CD4-positive, alpha-beta T cell (primary cell): ENCODE measurements at regions of chr4 and their contacts with region 1.

Region 1: GRCh38 chr4:74444891-74445642 is at the start of gene AREG:
- DNase-seq: peak; percentile 79 to 97 (median 90)
- ATAC-seq: peak; percentile 93
- H3K4me3 ChIP-seq: peak within 1 kb of the TSS; percentile 84
- H3K4me3 Mint-ChIP-seq: peak within 1 kb of the TSS; percentile 88
- H3K27ac ChIP-seq: peak within 1 kb of the TSS; percentile 72 to 93
- H3K27ac Mint-ChIP-seq: peak within 1 kb of the TSS; percentile 89
- H3K4me1 ChIP-seq: peaks cover 6% of the 10 kb centered on the region
- H3K4me1 Mint-ChIP-seq: peaks cover 15% of the 10 kb centered on the region
- H3K27me3 ChIP-seq: no peaks in the 10 kb centered on the region
- H3K27me3 Mint-ChIP-seq: peaks cover 5% of the 10 kb centered on the region
- CTCF ChIP-seq: peak; percentile 52
- total RNA-seq, gene AREG: 57.9 to 63.8 TPM

Region 2: GRCh38 chr4:74157561-74158465 is 287.3 kb before region 1 on chr4 and contains the start of gene MTHFD2L:
- CTCF ChIA-PET with region 1: no interaction called
- POLR2A ChIA-PET with region 1: no interaction called
- intact Hi-C with region 1: loop called in 1 of 2 experiments (anchors 5 kb)
- DNase-seq: peak; percentile 55 to 90 (median 74)
- ATAC-seq: peak; percentile 93
- H3K4me3 ChIP-seq: peak within 1 kb of the TSS; percentile 77
- H3K4me3 Mint-ChIP-seq: peak within 1 kb of the TSS; percentile 95
- H3K27ac ChIP-seq: no peak within 1 kb of the TSS
- H3K27ac Mint-ChIP-seq: peak within 1 kb of the TSS; percentile 87
- H3K4me1 ChIP-seq: peaks cover 14% of the 10 kb centered on the region
- H3K4me1 Mint-ChIP-seq: peaks cover 27% of the 10 kb centered on the region
- H3K27me3 ChIP-seq: no peaks in the 10 kb centered on the region
- H3K27me3 Mint-ChIP-seq: no peaks in the 10 kb centered on the region
- CTCF ChIP-seq: no peak
- total RNA-seq, gene MTHFD2L: 13.7 to 14.4 TPM

Region 3: GRCh38 chr4:74376888-74377483 is 68.1 kb before region 1 on chr4:
- CTCF ChIA-PET with region 1: interaction called, 4 read pairs
- POLR2A ChIA-PET with region 1: no interaction called
- intact Hi-C with region 1: loop called in 1 of 2 experiments (anchors 5 kb)
- DNase-seq: peak in 3 of 14 experiments; percentile 55 to 68 (median 67)
- ATAC-seq: peak; percentile 86
- H3K4me3 ChIP-seq: no peak overlapping the region
- H3K4me3 Mint-ChIP-seq: no peak overlapping the region
- H3K27ac ChIP-seq: no peak overlapping the region
- H3K27ac Mint-ChIP-seq: no peak overlapping the region
- H3K4me1 ChIP-seq: no peaks in the 10 kb centered on the region
- H3K4me1 Mint-ChIP-seq: no peaks in the 10 kb centered on the region
- H3K27me3 ChIP-seq: no peaks in the 10 kb centered on the region
- H3K27me3 Mint-ChIP-seq: peaks cover 3% of the 10 kb centered on the region
- CTCF ChIP-seq: peak; percentile 79

Region 4: DNA sequence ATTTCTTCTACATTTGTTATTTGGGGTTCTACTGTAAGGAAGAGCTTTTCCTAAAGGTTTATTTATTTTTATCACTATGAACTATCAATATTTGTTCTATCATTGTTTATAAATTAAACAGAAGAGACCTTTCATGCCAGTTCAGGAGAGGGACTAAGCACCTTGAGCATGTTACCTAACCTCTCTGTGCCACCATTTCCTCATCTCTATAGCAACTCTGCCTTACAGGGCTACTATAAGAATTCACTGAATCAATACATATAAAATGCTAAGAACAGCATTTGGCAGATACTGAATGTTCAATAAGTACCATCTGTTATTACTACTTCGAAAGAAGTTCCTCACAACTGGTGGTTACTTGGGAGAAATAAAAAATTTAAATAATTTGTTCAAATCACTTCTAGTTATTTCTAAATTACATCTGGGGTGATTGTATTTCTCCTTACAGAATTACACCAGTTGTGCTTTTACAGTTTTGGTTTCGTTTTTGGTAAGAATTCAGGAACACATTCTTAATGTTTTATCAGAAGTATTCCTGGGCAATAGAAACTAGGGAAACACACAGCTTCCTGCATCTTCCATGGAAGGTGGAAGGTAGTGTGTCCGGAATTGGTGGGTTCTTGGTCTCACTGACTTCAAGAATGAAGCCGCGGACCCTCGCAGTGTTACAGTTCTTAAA is 47.2 kb before region 1 on chr4:
- CTCF ChIA-PET with region 1: interaction called, 4 read pairs
- POLR2A ChIA-PET with region 1: interaction called, 26 read pairs
- intact Hi-C with region 1: loop called (anchors 1 to 5 kb)
- DNase-seq: peak in 5 of 14 experiments; percentile 5 to 61 (median 49)
- ATAC-seq: peak; percentile 83
- H3K4me3 ChIP-seq: peak overlapping the region; percentile 73
- H3K4me3 Mint-ChIP-seq: peak overlapping the region; percentile 94
- H3K27ac ChIP-seq: peak overlapping the region; percentile 64 to 83
- H3K27ac Mint-ChIP-seq: peak overlapping the region; percentile 94
- H3K4me1 ChIP-seq: no peaks in the 10 kb centered on the region
- H3K4me1 Mint-ChIP-seq: peaks cover 13% of the 10 kb centered on the region
- H3K27me3 ChIP-seq: no peaks in the 10 kb centered on the region
- H3K27me3 Mint-ChIP-seq: no peaks in the 10 kb centered on the region
- CTCF ChIP-seq: no peak

Region 5: GRCh38 chr4:74632634-74633033 is 187.6 kb after region 1 on chr4:
- CTCF ChIA-PET with region 1: no interaction called
- POLR2A ChIA-PET with region 1: no interaction called
- intact Hi-C with region 1: loop called in 1 of 2 experiments (anchors 10 kb)
- DNase-seq: peak in 11 of 14 experiments; percentile 2 to 71 (median 22)
- ATAC-seq: peak; percentile 95
- H3K4me3 ChIP-seq: no peak overlapping the region
- H3K4me3 Mint-ChIP-seq: peak overlapping the region; percentile 59
- H3K27ac ChIP-seq: no peak overlapping the region
- H3K27ac Mint-ChIP-seq: peak overlapping the region; percentile 50
- H3K4me1 ChIP-seq: peaks cover 2% of the 10 kb centered on the region
- H3K4me1 Mint-ChIP-seq: peaks cover 45% of the 10 kb centered on the region
- H3K27me3 ChIP-seq: no peaks in the 10 kb centered on the region
- H3K27me3 Mint-ChIP-seq: no peaks in the 10 kb centered on the region
- CTCF ChIP-seq: no peak